ENCODE measurements at regions of chr2 and their contacts with region 1.

Region 1: DNA sequence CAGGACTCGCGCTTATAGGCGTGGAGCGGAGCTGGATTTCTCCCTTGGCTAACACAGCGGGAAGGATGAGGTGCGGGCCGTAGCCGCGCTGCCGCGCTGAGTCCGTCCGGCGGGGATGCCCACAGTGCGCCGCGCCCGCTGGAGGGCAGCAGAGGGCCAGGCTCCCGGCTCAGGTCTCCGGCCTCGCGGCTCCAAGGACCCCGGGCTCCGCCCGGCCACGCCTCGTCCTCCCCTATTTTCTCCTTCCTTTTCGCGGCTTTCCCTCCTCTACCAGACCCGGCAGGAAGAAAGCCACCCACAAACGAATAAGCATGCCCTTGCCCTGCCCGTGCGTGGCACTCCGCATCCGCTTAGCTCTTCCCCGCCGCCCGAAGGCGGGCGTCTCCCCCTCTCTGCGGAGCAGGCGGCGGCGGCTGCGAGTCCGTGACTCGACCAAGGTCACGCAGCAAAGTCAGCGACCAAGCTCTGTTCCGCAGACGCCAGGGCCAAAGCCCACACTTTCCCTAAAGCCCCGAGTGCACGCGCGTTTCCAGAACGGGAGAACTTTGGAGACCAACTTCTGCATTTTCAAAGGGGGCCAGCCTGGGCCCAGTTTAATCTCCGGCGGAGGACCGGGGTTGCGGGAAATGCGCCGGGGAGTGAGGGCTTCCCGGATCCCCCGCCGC is 48.6 kb downstream of the KCNIP3 start:
- DNase-seq: peak; percentile 90
- H3K4me3 ChIP-seq: peak overlapping the region; percentile 48 to 95 (median 66)
- H3K27ac ChIP-seq: peak overlapping the region; percentile 42 to 95 (median 74)
- H3K4me1 ChIP-seq: peaks cover 10 to 39% of the 10 kb centered on the region in 2 donors
- H3K27me3 ChIP-seq: no peaks in the 10 kb centered on the region
- CTCF ChIP-seq: peak; percentile 70 to 95 (median 92)
- POLR2A ChIP-seq: peak in 1 of 2 donors; percentile 32

Region 2: DNA sequence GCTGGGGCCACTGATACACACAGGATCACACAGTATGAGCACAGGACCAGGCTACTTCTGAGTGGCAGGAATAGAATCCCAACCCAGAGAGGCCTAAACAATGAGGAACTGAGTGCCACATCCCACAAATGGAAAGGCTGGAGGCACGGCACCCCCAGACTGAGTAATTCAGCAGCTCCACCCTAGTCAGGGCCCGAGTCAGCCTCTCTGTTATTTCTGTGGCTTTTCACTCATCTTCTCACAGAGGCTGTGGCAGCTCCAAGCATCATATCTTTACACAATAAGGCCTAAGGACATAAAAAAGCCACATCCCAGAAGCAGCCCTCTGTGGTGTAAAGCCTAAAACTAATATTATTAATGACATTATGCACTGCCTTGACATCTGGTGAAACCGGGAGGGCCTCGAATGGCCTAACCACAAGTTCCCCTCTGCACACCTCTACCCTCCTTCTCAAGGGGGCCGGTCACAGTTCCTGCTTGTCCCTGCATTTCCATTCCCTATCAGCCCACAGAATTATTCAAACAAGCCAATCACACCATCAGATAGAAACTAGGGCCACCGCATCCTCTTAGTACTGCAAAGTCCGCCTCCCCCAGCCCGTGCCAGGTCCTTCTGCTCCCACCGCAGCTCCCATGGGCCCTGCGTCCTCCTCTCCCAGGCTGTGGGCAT is 332.7 kb before region 1 on chr2:
- intact Hi-C with region 1: no loop called
- DNase-seq: no peak
- H3K4me3 ChIP-seq: no peak overlapping the region
- H3K27ac ChIP-seq: no peak overlapping the region
- H3K4me1 ChIP-seq: no peaks in the 10 kb centered on the region
- H3K27me3 ChIP-seq: no peaks in the 10 kb centered on the region
- CTCF ChIP-seq: no peak
- POLR2A ChIP-seq: no peak

Region 3: DNA sequence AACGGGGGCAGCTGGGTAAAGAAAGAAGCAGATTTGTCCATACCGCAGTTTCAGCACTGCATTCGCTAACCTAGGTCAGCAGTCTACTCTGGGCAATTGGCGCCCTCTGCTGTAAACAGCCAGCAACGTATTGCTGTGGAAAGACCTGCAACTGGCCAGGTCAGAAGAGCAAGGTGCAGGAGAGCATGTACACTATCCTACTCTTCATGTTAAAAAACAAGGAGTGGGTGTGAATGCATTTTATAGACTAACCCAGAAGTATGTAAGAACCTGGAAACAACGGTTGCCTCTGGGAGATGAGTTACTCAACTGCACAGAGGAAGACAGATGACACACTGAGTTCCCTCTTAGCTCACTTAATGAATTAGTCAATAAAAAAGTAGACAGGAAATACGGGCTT is 230.3 kb before region 1 on chr2:
- intact Hi-C with region 1: no loop called
- DNase-seq: peak; percentile 78 to 81
- H3K4me3 ChIP-seq: no peak overlapping the region
- H3K27ac ChIP-seq: no peak overlapping the region
- H3K4me1 ChIP-seq: peaks cover 12 to 16% of the 10 kb centered on the region in 2 donors
- H3K27me3 ChIP-seq: no peaks in the 10 kb centered on the region
- CTCF ChIP-seq: peak; percentile 37 to 82 (median 73)
- POLR2A ChIP-seq: no peak

Region 4: GRCh38 chr2:95389245-95390119 is 43.8 kb after region 1 on chr2:
- intact Hi-C with region 1: loop called (anchors 5 kb)
- DNase-seq: peak; percentile 66 to 71
- H3K4me3 ChIP-seq: no peak overlapping the region
- H3K27ac ChIP-seq: no peak overlapping the region
- H3K4me1 ChIP-seq: peaks cover 13 to 28% of the 10 kb centered on the region in 2 donors
- H3K27me3 ChIP-seq: no peaks in the 10 kb centered on the region
- CTCF ChIP-seq: peak; percentile 71 to 93 (median 82)
- POLR2A ChIP-seq: no peak

Measured in thyroid gland (tissue), 4 donors.